WTC11 (cell line): ENCODE measurements at regions of chr17 and their contacts with region 1.

Region 1: DNA sequence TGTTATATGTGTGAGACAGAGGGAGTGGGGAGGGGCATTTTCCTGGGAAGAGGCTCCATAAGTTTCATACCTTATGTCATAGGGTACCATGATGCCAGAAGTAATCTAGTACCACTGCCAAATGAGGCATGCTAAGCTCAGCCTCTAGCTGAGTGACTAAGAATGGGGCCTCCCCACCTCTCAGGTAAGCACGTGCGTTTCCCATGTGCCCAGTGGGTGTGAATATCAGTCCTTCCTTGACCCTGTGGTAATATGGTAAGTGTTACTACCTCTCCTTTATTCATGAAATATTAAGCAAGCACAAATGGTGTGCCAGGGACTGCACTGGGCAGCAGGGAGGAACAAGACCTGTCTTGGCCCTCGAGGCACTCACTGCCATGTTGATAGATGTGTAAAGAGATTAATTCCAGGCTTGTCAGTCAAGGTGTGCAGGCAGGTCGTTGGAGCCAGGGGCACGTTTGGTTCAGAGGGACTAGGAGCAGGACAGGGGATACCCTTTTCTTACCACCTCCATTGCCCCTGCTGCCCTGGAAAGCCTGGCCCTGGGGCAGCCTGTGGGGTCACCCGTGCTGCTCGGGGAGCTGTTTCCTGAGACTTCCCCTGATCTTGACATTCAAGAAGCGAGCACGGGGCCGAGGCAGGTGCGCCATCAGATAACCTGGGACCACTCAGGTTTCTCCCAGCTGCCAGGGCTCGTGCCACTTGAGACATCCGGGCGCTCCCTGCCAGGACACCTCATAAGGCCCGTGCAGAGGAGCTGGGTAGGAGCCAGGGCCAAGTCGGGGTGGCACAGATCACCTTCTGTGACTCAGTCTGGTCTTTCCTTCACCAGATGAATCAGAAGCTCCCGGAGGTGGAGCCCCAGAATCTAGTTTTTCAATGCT is 8.8 kb downstream of the RSAD1 start:
- DNase-seq: no peak
- ATAC-seq: no peak
- H3K4me3 Mint-ChIP-seq: no peak overlapping the region
- H3K27ac Mint-ChIP-seq: no peak overlapping the region
- H3K4me1 Mint-ChIP-seq: no peaks in the 10 kb centered on the region
- H3K27me3 Mint-ChIP-seq: no peaks in the 10 kb centered on the region
- CTCF ChIP-seq: no peak

Region 2: DNA sequence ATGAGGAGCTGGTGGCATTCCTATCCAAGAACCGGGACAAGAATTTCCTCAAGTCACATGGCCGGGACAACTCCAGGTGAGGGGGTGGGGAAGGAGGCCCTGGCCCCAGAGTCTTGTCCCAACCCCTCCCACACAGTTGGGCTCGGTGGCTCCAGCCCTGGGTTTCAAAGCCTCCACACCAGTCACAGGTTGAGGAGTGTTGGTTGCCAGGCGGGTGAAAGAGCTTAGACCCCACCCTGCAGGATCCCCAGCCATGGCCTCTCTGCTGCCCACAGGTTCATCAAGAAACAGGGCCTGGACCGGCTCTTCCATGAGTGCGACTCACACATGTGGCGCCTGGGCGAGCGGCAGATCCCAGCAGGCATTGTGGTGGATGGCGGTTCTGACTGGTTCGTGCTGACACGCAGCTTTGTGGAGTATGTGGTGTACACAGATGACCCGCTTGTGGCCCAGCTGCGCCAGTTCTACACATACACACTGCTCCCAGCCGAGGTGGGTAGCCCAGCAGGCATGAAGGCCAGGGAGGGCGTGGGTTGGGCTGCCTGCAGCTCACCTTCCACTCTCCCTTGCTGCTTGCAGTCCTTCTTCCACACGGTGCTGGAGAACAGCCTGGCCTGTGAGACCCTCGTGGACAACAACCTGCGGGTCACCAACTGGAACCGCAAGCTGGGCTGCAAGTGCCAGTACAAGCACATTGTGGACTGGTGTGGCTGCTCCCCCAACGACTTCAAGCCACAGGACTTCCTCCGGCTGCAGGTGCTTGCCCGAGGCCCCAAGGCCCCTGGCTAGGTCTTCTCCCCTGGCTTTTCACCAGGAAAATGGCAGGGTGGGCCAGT is 131.7 kb before region 1 on chr17:
- CTCF ChIA-PET with region 1: no interaction called
- POLR2A ChIA-PET with region 1: no interaction called
- DNase-seq: no peak
- ATAC-seq: no peak
- H3K4me3 Mint-ChIP-seq: no peak overlapping the region
- H3K27ac Mint-ChIP-seq: no peak overlapping the region
- H3K4me1 Mint-ChIP-seq: no peaks in the 10 kb centered on the region
- H3K27me3 Mint-ChIP-seq: no peaks in the 10 kb centered on the region
- CTCF ChIP-seq: no peak

Region 3: GRCh38 chr17:50501054-50501453 is 13.6 kb after region 1 on chr17:
- CTCF ChIA-PET with region 1: interaction called, 35 read pairs
- POLR2A ChIA-PET with region 1: no interaction called
- DNase-seq: no peak
- ATAC-seq: no peak
- H3K4me3 Mint-ChIP-seq: no peak overlapping the region
- H3K27ac Mint-ChIP-seq: no peak overlapping the region
- H3K4me1 Mint-ChIP-seq: peaks cover 8% of the 10 kb centered on the region
- H3K27me3 Mint-ChIP-seq: no peaks in the 10 kb centered on the region
- CTCF ChIP-seq: peak; percentile 30; the same call in 1 of the 2 replicates